ENCODE measurements at regions of chr6 and their contacts with region 1.

Region 1: GRCh38 chr6:12890171-12890790 is 173.7 kb downstream of the PHACTR1 start:
- DNase-seq: no peak
- ATAC-seq: no peak
- H3K4me3 ChIP-seq: no peak overlapping the region
- H3K27ac ChIP-seq: no peak overlapping the region
- H3K4me1 ChIP-seq: no peaks in the 10 kb centered on the region
- H3K27me3 ChIP-seq: no peaks in the 10 kb centered on the region
- CTCF ChIP-seq: peak in 1 of 4 donors; percentile 14

Region 2: DNA sequence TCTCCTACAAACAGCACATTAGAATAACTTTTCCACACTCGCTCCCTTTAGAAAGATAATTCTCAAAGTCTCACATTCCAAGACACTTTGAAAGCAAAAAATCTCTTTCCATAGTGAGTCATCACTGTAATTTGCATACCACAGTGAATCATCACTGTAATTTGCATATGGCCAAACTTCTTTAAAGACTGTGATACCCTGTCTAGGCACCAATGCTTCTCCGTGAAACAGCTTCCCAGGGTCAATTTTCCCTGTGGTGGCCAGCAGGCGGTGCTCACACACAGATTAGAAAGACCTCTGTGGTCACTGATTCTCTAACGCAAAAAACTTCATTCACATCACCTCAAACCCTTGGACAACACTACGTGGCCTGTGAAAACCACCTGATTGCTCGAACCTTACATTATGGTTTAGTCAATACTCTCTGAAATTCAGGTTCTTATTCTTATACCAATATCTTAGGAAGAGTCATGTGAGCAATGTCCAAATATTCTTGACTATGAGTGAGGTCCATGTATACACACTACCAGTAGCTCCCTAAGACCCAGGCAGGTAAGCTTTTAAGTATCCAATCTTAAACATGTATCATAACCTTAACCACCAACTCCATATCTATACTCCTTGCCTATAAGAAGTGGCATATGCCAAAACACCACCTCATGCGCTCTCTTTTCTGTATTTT is 252.2 kb before region 1 on chr6:
- intact Hi-C with region 1: loop called in 1 of 3 experiments (anchors 5 kb)
- DNase-seq: peak; percentile 27 to 77 (median 38)
- ATAC-seq: peak; percentile 56 to 89 (median 84)
- H3K4me3 ChIP-seq: no peak overlapping the region
- H3K27ac ChIP-seq: no peak overlapping the region
- H3K4me1 ChIP-seq: no peaks in the 10 kb centered on the region
- H3K27me3 ChIP-seq: peaks cover 0 to 16% (median 0%) of the 10 kb centered on the region in 4 donors
- CTCF ChIP-seq: peak; percentile 26 to 51 (median 44)

Region 3: DNA sequence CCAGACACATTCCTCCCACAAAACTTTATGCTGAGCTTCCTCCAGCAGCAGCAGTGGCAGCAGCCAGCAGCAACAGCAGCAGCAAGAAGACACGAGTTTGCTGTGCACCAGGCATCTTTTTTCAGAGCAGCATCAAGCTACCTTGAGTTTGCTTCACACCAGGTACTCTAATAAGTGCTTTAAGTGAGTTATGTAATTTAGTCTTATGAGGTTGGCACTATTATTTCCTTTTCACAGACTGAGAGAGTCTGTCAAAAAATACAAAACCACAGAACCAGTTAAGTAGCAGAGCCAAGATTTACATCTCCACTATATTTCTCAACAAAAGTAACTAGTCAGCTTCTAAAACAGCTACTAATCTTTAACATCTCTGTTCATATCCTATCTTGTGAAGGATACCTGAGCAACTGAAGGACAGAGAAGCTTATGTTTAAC is 797.7 kb after region 1 on chr6:
- intact Hi-C with region 1: no loop called
- DNase-seq: no peak
- ATAC-seq: no peak
- H3K4me3 ChIP-seq: no peak overlapping the region
- H3K27ac ChIP-seq: no peak overlapping the region
- H3K4me1 ChIP-seq: peaks cover 0 to 5% (median 0%) of the 10 kb centered on the region in 3 donors
- H3K27me3 ChIP-seq: no peaks in the 10 kb centered on the region
- CTCF ChIP-seq: no peak

Measured in pancreas (tissue), 10 donors.